PC-3 (cell line): ENCODE measurements at regions of chr13 and their contacts with region 1.

Region 1: DNA sequence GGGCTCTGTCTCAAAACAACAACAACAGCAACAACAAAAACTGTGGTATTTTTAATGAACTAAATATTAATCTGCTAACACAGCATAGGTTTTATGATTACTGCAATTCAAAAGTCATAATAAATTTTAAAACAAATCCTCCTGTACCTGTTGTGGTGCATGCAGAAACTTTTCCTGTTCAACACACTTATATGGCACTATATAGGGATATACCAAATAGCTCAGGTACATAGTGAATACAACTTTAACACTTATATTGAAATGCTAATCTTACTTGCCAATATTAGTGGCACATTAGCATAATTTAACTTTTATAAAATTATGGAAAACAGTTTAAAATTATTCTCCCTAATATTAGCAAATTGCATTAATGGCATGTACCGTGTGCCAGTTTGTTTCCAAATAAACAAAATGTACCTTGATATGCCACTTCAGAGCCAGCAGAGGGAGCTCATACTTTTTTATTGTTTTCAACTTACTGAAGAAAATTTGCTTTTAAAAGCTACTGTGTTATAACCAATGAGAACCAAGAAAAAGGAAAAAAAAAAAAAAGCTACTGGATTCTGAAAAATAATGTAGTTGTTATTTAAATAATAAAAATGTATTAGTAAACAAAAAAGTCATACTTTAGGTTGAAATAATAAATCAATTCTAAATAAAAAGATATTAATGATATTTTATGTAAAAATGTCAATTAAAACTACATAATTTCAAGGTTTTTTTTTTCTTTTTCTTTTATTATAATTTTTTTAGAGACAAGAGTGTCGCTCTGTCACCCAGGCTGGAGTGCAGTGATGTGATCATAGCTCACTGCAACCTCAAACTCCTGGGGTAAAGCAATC is 18.0 kb upstream of the RBM26 start:
- DNase-seq: peak; percentile 58
- ATAC-seq: peak; percentile 42
- H3K4me3 ChIP-seq: no peak overlapping the region
- H3K27ac ChIP-seq: no peak overlapping the region
- H3K4me1 ChIP-seq: peaks cover 8% of the 10 kb centered on the region; the same call in 1 of the 2 replicates
- H3K27me3 ChIP-seq: no peaks in the 10 kb centered on the region
- CTCF ChIP-seq: peak; percentile 62

Region 2: GRCh38 chr13:79533781-79534400 is 109.9 kb after region 1 on chr13:
- CTCF ChIA-PET with region 1: interaction called, 5 read pairs
- POLR2A ChIA-PET with region 1: interaction called, 5 read pairs
- intact Hi-C with region 1: loop called (anchors 1 kb)
- DNase-seq: no peak
- ATAC-seq: 0 out of 2 replicates have a peak, but pooled peaks have one; percentile 13
- H3K4me3 ChIP-seq: no peak overlapping the region
- H3K27ac ChIP-seq: no peak overlapping the region
- H3K4me1 ChIP-seq: no peaks in the 10 kb centered on the region; the same call in 1 of the 2 replicates
- H3K27me3 ChIP-seq: no peaks in the 10 kb centered on the region
- CTCF ChIP-seq: no peak

Region 3: DNA sequence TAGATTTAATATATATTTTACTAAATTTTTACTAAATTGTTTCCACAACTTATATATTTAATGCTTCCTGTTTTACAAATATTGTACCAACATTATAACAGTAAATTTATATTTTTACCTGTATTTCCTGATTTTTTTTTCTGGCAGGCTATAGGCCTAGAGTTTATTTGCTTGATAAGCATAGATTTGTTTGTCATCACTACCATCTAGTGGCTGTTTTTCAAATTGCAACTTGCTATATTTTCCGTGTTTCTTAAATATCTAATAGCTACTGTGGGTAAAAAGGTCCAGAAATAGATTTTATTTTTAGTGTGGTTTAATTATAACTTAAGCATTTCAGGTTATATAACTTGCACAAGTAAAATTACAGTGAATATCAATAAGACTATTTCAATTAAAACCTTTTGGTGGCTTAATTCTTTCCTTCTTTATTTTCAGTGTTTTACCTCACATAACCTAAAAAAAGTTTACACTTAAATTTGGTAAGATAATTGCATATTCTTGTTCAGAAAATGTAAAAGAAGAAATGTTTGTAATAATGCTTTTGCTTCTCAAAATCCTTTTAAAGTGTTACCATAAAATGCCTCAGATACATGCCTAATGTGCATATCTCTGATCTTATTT is 117.5 kb after region 1 on chr13:
- CTCF ChIA-PET with region 1: interaction called, 32 read pairs
- POLR2A ChIA-PET with region 1: no interaction called
- intact Hi-C with region 1: loop called (anchors 1 kb)
- DNase-seq: peak; percentile 82
- ATAC-seq: peak; percentile 48; the same call in 1 of the 2 replicates
- H3K4me3 ChIP-seq: no peak overlapping the region
- H3K27ac ChIP-seq: no peak overlapping the region
- H3K4me1 ChIP-seq: no peaks in the 10 kb centered on the region
- H3K27me3 ChIP-seq: no peaks in the 10 kb centered on the region
- CTCF ChIP-seq: peak; percentile 70

Region 4: GRCh38 chr13:80923907-80924306 is 1499.9 kb after region 1 on chr13:
- CTCF ChIA-PET with region 1: no interaction called
- POLR2A ChIA-PET with region 1: no interaction called
- intact Hi-C with region 1: no loop called
- DNase-seq: no peak
- ATAC-seq: no peak
- H3K4me3 ChIP-seq: no peak overlapping the region
- H3K27ac ChIP-seq: no peak overlapping the region
- H3K4me1 ChIP-seq: no peaks in the 10 kb centered on the region
- H3K27me3 ChIP-seq: no peaks in the 10 kb centered on the region
- CTCF ChIP-seq: peak; percentile 27; the same call in 1 of the 2 replicates